Endothelial cell of umbilical vein (primary cell): ENCODE measurements at regions of chr1 and their contacts with region 1.

Region 1: DNA sequence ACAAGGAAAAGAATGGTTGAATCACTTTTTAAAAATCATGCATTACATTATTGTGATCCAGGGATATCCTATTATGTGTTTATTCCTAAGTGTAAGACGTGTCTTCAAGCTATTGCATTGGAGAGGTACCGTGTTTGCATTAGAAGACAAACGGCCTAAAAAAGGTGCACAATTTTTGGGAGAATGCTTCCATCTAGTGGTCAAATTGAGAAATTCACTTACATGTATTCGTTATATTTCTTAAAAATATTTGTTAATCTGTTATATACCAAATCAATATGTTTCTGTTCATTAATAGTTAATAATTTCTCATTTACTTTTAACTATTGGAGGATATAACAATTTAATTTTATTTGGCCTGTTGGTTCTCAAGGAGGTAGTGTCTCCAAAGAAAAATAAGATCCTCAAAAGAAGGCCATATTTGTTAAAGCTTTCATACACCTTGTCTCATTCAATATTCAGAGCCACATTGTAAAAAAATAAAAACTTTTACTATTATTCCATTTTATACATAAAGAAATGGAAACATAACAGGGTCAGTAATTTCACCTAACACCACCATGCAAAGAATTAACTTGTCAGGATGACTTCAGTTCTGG is 40.5 kb upstream of the KCTD3 start:
- DNase-seq: peak; percentile 61
- H3K4me3 ChIP-seq: no peak overlapping the region
- H3K27ac ChIP-seq: no peak overlapping the region
- H3K4me1 ChIP-seq: no peaks in the 10 kb centered on the region
- H3K27me3 ChIP-seq: peaks cover 0 to 2% of the 10 kb centered on the region in 2 experiments
- CTCF ChIP-seq: peak; percentile 32 to 36
- POLR2A ChIP-seq: no peak

Region 2: GRCh38 chr1:214476958-214477870 is 1049.4 kb before region 1 on chr1:
- CTCF ChIA-PET with region 1: no interaction called
- POLR2A ChIA-PET with region 1: no interaction called
- dilution Hi-C with region 1: no loop called
- intact Hi-C with region 1: no loop called
- DNase-seq: peak; percentile 75
- H3K4me3 ChIP-seq: peak overlapping the region in 1 of 3 experiments; percentile 15
- H3K27ac ChIP-seq: peak overlapping the region; percentile 70
- H3K4me1 ChIP-seq: peaks cover 28% of the 10 kb centered on the region
- H3K27me3 ChIP-seq: no peaks in the 10 kb centered on the region
- CTCF ChIP-seq: no peak
- POLR2A ChIP-seq: no peak

Region 3: DNA sequence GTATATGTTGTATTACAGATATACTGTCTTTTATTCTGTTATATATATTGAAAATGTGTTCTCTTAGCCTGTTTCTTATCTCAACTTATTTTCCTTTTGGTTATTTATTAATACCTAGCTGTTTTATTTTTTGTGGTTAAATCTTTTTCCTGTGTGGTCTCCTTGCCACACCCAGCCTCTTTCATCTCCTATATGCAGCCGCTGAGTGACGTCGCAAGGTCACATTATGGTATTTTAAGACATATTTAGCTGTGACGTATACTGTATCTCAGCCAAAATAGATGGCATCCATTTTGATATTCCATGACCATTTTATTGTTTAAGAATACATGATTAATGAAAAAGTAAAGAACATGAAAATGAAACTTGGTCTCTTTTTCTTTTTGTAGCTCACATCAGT is 894.6 kb before region 1 on chr1:
- CTCF ChIA-PET with region 1: interaction called, 25 read pairs
- POLR2A ChIA-PET with region 1: no interaction called
- dilution Hi-C with region 1: no loop called
- intact Hi-C with region 1: loop called (anchors 1 kb)
- DNase-seq: no peak
- H3K4me3 ChIP-seq: no peak overlapping the region
- H3K27ac ChIP-seq: no peak overlapping the region
- H3K4me1 ChIP-seq: no peaks in the 10 kb centered on the region
- H3K27me3 ChIP-seq: no peaks in the 10 kb centered on the region
- CTCF ChIP-seq: no peak
- POLR2A ChIP-seq: no peak

Region 4: GRCh38 chr1:214660862-214661261 is 865.8 kb before region 1 on chr1:
- CTCF ChIA-PET with region 1: interaction called, 49 read pairs
- POLR2A ChIA-PET with region 1: no interaction called
- dilution Hi-C with region 1: no loop called
- intact Hi-C with region 1: loop called (anchors 1 kb)
- DNase-seq: peak; percentile 33
- H3K4me3 ChIP-seq: no peak overlapping the region
- H3K27ac ChIP-seq: no peak overlapping the region
- H3K4me1 ChIP-seq: no peaks in the 10 kb centered on the region
- H3K27me3 ChIP-seq: no peaks in the 10 kb centered on the region
- CTCF ChIP-seq: peak; percentile 24 to 42
- POLR2A ChIP-seq: no peak

Region 5: DNA sequence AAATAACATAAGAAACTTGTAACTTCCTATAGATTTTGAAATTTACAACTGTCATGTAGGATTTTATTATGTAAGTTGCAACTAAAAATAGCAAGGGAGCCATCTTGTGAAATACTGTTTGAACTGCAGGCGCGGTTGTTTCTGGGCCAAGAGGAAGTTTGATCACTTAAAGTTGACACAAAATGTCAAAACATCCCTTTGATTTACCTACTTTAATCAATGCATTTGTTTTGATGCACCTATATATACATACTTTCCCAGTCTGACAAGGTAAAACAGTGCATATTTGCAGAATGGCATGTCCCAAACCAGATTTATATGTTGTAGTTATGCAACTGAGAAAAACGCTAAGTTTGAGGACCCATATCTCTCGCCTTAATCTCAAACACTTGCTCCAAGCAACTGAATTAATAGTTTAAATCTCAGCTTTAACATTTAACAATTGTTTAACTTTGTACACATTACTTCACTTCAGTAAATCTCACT is 380.3 kb before region 1 on chr1:
- CTCF ChIA-PET with region 1: interaction called, 17 read pairs
- POLR2A ChIA-PET with region 1: no interaction called
- dilution Hi-C with region 1: no loop called
- intact Hi-C with region 1: loop called (anchors 2 kb)
- DNase-seq: peak; percentile 55
- H3K4me3 ChIP-seq: no peak overlapping the region
- H3K27ac ChIP-seq: no peak overlapping the region
- H3K4me1 ChIP-seq: no peaks in the 10 kb centered on the region
- H3K27me3 ChIP-seq: no peaks in the 10 kb centered on the region
- CTCF ChIP-seq: peak; percentile 38 to 49
- POLR2A ChIP-seq: no peak

Region 6: GRCh38 chr1:215539803-215540592 is 13.3 kb after region 1 on chr1:
- CTCF ChIA-PET with region 1: interaction called, 19 read pairs
- POLR2A ChIA-PET with region 1: no interaction called
- dilution Hi-C with region 1: no loop called
- intact Hi-C with region 1: no loop called
- DNase-seq: peak; percentile 38
- H3K4me3 ChIP-seq: no peak overlapping the region
- H3K27ac ChIP-seq: no peak overlapping the region
- H3K4me1 ChIP-seq: no peaks in the 10 kb centered on the region
- H3K27me3 ChIP-seq: peaks cover 0 to 6% of the 10 kb centered on the region in 2 experiments
- CTCF ChIP-seq: no peak
- POLR2A ChIP-seq: no peak

Region 7: GRCh38 chr1:215551806-215552205 is 25.2 kb after region 1 on chr1:
- CTCF ChIA-PET with region 1: no interaction called
- POLR2A ChIA-PET with region 1: no interaction called
- dilution Hi-C with region 1: no loop called
- intact Hi-C with region 1: no loop called
- DNase-seq: no peak
- H3K4me3 ChIP-seq: no peak overlapping the region
- H3K27ac ChIP-seq: no peak overlapping the region
- H3K4me1 ChIP-seq: no peaks in the 10 kb centered on the region
- H3K27me3 ChIP-seq: peaks cover 2% of the 10 kb centered on the region in 2 experiments
- CTCF ChIP-seq: no peak
- POLR2A ChIP-seq: no peak